ENCODE measurements at regions of chr13 and their contacts with region 1.

Region 1: DNA sequence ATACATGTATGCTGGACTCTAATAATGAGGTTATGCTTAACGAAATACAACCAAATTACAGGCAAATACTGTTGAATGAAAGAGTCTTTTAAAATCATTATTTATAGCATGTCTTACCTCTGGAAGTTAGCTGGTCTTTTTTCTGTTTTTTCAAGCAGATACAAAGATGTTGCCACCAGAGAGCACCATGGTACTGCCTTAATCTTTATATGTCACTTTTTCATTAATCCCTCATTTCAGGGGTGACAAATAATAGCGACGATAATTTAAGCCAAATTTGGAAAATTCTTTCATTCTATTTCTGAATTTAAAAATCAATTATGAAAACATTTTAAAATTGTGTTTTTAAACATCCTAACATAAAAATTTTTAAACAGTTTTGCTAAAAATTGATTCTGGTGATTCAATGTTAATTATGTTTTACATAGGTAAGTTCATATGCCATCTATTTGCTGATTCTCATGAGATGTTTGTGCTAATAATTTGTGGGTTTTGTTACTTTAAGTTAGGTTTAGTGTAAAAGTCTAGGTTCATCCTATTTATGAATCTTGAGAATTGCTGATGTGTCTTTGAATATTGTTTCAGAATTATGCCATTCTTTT is 379.3 kb upstream of the SGCG start:
- DNase-seq: no peak
- ATAC-seq: no peak
- H3K4me3 Mint-ChIP-seq: no peak overlapping the region
- H3K27ac Mint-ChIP-seq: no peak overlapping the region
- H3K4me1 Mint-ChIP-seq: peaks cover 9% of the 10 kb centered on the region
- H3K27me3 Mint-ChIP-seq: no peaks in the 10 kb centered on the region
- CTCF ChIP-seq: no peak

Region 2: GRCh38 chr13:22789027-22789593 is 12.4 kb before region 1 on chr13:
- CTCF ChIA-PET with region 1: interaction called, 10 read pairs
- POLR2A ChIA-PET with region 1: no interaction called
- DNase-seq: no peak
- ATAC-seq: no peak
- H3K4me3 Mint-ChIP-seq: no peak overlapping the region
- H3K27ac Mint-ChIP-seq: no peak overlapping the region
- H3K4me1 Mint-ChIP-seq: peaks cover 15% of the 10 kb centered on the region
- H3K27me3 Mint-ChIP-seq: no peaks in the 10 kb centered on the region
- CTCF ChIP-seq: no peak

Region 3: GRCh38 chr13:22996983-22997382 is 195.5 kb after region 1 on chr13:
- CTCF ChIA-PET with region 1: no interaction called
- POLR2A ChIA-PET with region 1: no interaction called
- DNase-seq: no peak
- ATAC-seq: no peak
- H3K4me3 Mint-ChIP-seq: no peak overlapping the region
- H3K27ac Mint-ChIP-seq: no peak overlapping the region
- H3K4me1 Mint-ChIP-seq: 0 out of 2 replicates have a peak, but pooled peaks cover under 1% of the 10 kb centered on the region
- H3K27me3 Mint-ChIP-seq: no peaks in the 10 kb centered on the region
- CTCF ChIP-seq: no peak

Region 4: GRCh38 chr13:23020223-23020843 is 218.8 kb after region 1 on chr13:
- CTCF ChIA-PET with region 1: interaction called, 17 read pairs
- POLR2A ChIA-PET with region 1: no interaction called
- DNase-seq: peak; percentile 43
- ATAC-seq: peak; percentile 92
- H3K4me3 Mint-ChIP-seq: no peak overlapping the region
- H3K27ac Mint-ChIP-seq: no peak overlapping the region
- H3K4me1 Mint-ChIP-seq: peaks cover 8% of the 10 kb centered on the region; the same call in 1 of the 2 replicates
- H3K27me3 Mint-ChIP-seq: no peaks in the 10 kb centered on the region
- CTCF ChIP-seq: peak; percentile 73

Region 5: GRCh38 chr13:23087880-23088279 is 286.4 kb after region 1 on chr13:
- CTCF ChIA-PET with region 1: interaction called, 12 read pairs
- POLR2A ChIA-PET with region 1: no interaction called
- DNase-seq: peak; percentile 62
- ATAC-seq: peak; percentile 82
- H3K4me3 Mint-ChIP-seq: no peak overlapping the region
- H3K27ac Mint-ChIP-seq: no peak overlapping the region
- H3K4me1 Mint-ChIP-seq: no peaks in the 10 kb centered on the region
- H3K27me3 Mint-ChIP-seq: no peaks in the 10 kb centered on the region
- CTCF ChIP-seq: no peak; the same call in 1 of the 2 replicates